Transverse colon (tissue), 4 donors: ENCODE measurements at regions of chr1 and their contacts with region 1.

Region 1: DNA sequence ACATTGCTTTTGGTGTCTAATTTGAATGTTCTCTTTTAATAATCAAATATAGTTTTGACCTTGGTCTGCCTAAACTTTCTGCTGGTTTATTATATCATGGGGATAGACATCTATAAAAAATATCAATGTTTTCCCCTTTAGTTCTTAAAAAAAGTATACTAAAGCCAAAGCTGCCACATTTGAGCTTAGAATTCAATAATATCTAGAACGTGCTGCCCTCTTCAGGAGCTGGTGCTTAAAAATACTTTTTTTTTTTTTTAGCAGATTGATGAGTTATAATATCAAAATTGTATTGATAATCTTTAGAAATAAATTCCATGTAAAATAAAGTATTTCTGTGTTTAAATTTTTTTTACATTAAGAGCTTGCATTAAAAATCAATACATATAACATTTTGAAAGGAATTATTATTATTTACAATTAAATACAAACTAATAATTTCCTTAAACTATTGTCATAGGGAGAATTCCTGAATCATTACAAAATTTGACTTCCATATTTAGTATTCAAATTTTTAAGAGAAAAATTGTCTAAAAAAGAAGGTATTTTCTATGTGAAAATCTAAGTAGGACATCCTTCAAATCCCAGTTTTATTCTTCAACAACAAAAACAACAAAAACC is 40.1 kb upstream of the ADGRL2 start:
- DNase-seq: no peak
- H3K4me3 ChIP-seq: no peak overlapping the region
- H3K27ac ChIP-seq: no peak overlapping the region
- H3K4me1 ChIP-seq: peaks cover 0 to 3% (median 0%) of the 10 kb centered on the region in 4 donors
- H3K27me3 ChIP-seq: no peaks in the 10 kb centered on the region
- CTCF ChIP-seq: peak in 1 of 5 experiments; percentile 12
- EP300 ChIP-seq: no peak
- POLR2A ChIP-seq: no peak

Region 2: GRCh38 chr1:81414488-81415015 is 346.0 kb before region 1 on chr1:
- in situ Hi-C with region 1: loop called in 1 of 4 experiments (anchors 25 kb)
- intact Hi-C with region 1: no loop called
- DNase-seq: peak; percentile 85
- H3K4me3 ChIP-seq: no peak overlapping the region
- H3K27ac ChIP-seq: no peak overlapping the region
- H3K4me1 ChIP-seq: peaks cover 0 to 5% (median 2%) of the 10 kb centered on the region in 4 donors
- H3K27me3 ChIP-seq: no peaks in the 10 kb centered on the region
- CTCF ChIP-seq: peak; percentile 74 to 89 (median 85)
- EP300 ChIP-seq: no peak
- POLR2A ChIP-seq: no peak